ENCODE measurements at regions of chr6 and their contacts with region 1.

Region 1: GRCh38 chr6:158819213-158819909 is at the start of gene EZR:
- DNase-seq: peak; percentile 80
- ATAC-seq: peak; percentile 66
- H3K4me3 Mint-ChIP-seq: peak within 1 kb of the TSS; percentile 100
- H3K27ac Mint-ChIP-seq: peak within 1 kb of the TSS; percentile 95
- H3K4me1 Mint-ChIP-seq: peaks cover 51% of the 10 kb centered on the region
- H3K27me3 Mint-ChIP-seq: no peaks in the 10 kb centered on the region
- CTCF ChIP-seq: no peak
- total RNA-seq, gene EZR: 488 and 489 TPM in 2 replicates

Region 2: GRCh38 chr6:158644231-158645063 is 174.9 kb before region 1 on chr6 and contains the start of gene DYNLT1:
- CTCF ChIA-PET with region 1: no interaction called
- POLR2A ChIA-PET with region 1: interaction called, 3 read pairs
- intact Hi-C with region 1: loop called (anchors 5 kb)
- DNase-seq: peak; percentile 97
- ATAC-seq: peak; percentile 68
- H3K4me3 Mint-ChIP-seq: peak within 1 kb of the TSS; percentile 95
- H3K27ac Mint-ChIP-seq: peak within 1 kb of the TSS; percentile 85
- H3K4me1 Mint-ChIP-seq: peaks cover 52% of the 10 kb centered on the region
- H3K27me3 Mint-ChIP-seq: no peaks in the 10 kb centered on the region
- CTCF ChIP-seq: no peak
- total RNA-seq, gene DYNLT1: 37.7 and 43.9 TPM in 2 replicates

Region 3: DNA sequence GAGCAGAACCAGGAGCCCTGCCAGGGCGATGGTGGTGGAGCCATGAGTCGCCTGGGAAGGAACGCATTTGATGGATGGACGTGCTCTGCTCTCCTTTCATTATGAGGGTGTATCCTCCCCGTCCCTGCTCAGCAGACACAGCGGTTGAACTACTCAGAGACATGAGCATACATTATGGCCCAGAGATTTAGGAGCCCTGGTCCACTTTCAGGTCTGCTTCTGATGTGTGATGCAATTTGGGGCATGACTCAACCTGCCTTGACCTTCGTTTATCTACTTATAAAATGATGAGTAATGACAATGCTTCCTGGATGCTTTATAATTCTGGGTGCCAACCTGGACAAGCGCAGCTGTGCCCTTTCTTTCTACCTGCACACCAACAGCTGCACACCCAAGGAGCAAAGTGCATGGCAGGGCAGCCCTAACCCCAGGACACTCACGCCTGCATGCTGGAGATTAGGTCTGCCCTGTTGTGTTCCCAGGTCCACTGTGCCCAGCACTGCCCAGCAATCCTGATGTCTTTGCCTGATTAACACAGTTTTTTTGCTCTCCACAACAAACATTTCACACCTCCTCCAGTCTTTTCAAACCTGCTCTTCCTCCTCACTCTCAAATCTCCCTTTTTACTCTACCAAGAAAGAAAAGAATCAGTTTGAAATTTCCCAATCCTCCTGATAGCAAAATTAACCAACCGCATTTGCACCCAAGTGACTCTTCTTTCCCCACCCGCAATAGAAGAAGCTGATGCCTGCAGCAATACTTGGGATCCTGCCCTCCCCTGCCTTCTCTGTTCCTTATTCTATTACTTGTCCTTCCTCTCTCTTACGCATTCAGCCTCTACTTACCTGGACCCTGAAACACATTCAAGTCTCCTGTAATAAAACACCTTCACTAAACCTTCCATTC is 81.4 kb before region 1 on chr6:
- CTCF ChIA-PET with region 1: no interaction called
- POLR2A ChIA-PET with region 1: no interaction called
- intact Hi-C with region 1: no loop called
- DNase-seq: no peak
- ATAC-seq: no peak
- H3K4me3 Mint-ChIP-seq: no peak overlapping the region
- H3K27ac Mint-ChIP-seq: no peak overlapping the region
- H3K4me1 Mint-ChIP-seq: no peaks in the 10 kb centered on the region
- H3K27me3 Mint-ChIP-seq: no peaks in the 10 kb centered on the region
- CTCF ChIP-seq: no peak

Region 4: GRCh38 chr6:158793432-158793831 is 25.9 kb before region 1 on chr6:
- CTCF ChIA-PET with region 1: interaction called, 10 read pairs
- POLR2A ChIA-PET with region 1: interaction called, 139 read pairs
- intact Hi-C with region 1: loop called (anchors 1 kb)
- DNase-seq: no peak
- ATAC-seq: peak; percentile 54
- H3K4me3 Mint-ChIP-seq: peak overlapping the region; percentile 44
- H3K27ac Mint-ChIP-seq: peak overlapping the region; percentile 70
- H3K4me1 Mint-ChIP-seq: peaks cover 95% of the 10 kb centered on the region
- H3K27me3 Mint-ChIP-seq: no peaks in the 10 kb centered on the region
- CTCF ChIP-seq: no peak

Region 5: DNA sequence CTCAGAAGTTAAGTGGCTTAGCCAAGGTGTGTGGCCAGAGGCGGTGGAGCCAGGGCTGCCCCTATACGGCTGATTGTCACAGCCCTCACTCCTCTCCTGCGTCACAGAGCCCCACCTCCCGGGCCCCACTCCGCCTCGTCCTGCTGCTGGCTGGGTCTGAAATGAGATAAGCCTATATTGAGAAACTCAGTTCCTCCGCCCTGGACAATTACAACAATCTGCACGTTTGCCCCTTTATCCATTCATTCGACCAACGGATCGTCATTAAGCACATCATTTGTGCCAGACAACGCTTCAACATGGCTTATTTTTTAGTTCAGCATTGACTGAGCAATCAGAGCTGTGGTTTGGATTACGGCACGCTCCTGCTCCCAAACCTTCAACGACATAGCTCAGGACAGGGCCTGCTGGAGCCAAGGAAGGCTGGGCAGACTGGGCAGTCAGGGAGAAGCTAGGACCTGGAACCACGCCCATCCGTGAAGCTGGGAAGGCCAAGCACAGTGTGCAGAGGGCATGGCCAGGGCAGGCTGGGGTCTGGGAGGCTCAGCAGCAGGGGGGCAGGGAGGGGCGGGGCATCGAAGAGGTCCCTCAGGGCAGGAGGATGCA is 16.4 kb after region 1 on chr6:
- CTCF ChIA-PET with region 1: no interaction called
- POLR2A ChIA-PET with region 1: interaction called, 12 read pairs
- intact Hi-C with region 1: no loop called
- DNase-seq: no peak
- ATAC-seq: peak; percentile 52
- H3K4me3 Mint-ChIP-seq: no peak overlapping the region
- H3K27ac Mint-ChIP-seq: no peak overlapping the region
- H3K4me1 Mint-ChIP-seq: peaks cover 22% of the 10 kb centered on the region
- H3K27me3 Mint-ChIP-seq: no peaks in the 10 kb centered on the region
- CTCF ChIP-seq: no peak

Region 6: DNA sequence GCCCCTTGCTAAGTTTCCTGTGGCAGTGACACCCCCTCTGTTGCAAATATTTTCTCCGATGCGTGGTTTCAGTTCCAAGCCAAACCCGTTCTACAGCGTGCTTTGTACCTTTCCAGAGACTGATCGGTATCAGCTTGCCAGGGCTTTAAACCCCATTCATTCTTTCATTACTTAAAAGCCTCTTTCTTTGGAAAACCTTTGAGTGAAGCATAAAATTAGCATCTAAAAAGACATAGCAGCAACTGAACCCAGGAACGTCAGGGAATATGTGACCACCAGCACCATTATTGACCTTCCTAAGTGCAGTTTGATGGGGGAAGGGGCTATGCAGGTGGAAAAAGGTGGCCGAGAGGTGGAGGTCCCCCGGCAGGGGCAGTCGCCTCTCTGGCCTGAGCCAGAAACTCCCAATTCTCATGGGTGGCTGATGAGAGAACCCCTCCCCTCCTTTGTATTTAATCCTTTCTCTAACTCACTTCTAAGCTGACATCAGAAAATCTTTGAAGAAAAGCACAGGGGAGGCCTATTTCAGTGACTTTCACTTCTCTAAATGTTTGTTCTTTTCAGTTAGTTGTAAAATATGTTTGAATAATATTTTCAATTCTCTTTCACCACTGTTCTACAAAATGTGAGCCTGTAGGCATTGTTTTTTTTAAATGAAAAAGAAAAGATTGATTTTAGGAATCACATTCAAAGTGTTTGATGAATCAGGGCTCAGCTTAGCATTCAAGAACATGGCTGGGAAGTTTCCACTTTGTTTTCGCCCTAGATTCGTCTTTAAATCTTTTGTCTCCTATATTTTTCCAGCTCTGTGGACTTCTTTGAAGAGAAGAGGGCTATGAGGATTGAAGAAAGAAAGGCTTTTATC is 91.4 kb after region 1 on chr6:
- CTCF ChIA-PET with region 1: no interaction called
- POLR2A ChIA-PET with region 1: interaction called, 31 read pairs
- intact Hi-C with region 1: loop called (anchors 2 kb)
- DNase-seq: peak; percentile 36
- ATAC-seq: peak; percentile 76
- H3K4me3 Mint-ChIP-seq: peak overlapping the region; percentile 80
- H3K27ac Mint-ChIP-seq: peak overlapping the region; percentile 96
- H3K4me1 Mint-ChIP-seq: peaks cover 58% of the 10 kb centered on the region
- H3K27me3 Mint-ChIP-seq: no peaks in the 10 kb centered on the region
- CTCF ChIP-seq: no peak

Region 7: GRCh38 chr6:158999666-159000403 is 180.5 kb after region 1 on chr6 and contains the start of gene RSPH3:
- CTCF ChIA-PET with region 1: no interaction called
- POLR2A ChIA-PET with region 1: interaction called, 10 read pairs
- intact Hi-C with region 1: no loop called
- DNase-seq: peak; percentile 87
- ATAC-seq: peak; percentile 90
- H3K4me3 Mint-ChIP-seq: peak within 1 kb of the TSS; percentile 94
- H3K27ac Mint-ChIP-seq: peak within 1 kb of the TSS; percentile 85
- H3K4me1 Mint-ChIP-seq: peaks cover 27% of the 10 kb centered on the region
- H3K27me3 Mint-ChIP-seq: no peaks in the 10 kb centered on the region
- CTCF ChIP-seq: no peak
- total RNA-seq, gene RSPH3: 1.9 and 2.4 TPM in 2 replicates

Measured in activated B cell treated with CpG ODN at 0.5 μM for 24 hours (primary cell).